Activated B cell treated with CpG ODN at 0.5 μM for 24 hours (primary cell): ENCODE measurements at regions of chr22 and their contacts with region 1.

Region 1: GRCh38 chr22:50469377-50470305 is 5.2 kb downstream of the SBF1 start:
- DNase-seq: peak; percentile 84
- ATAC-seq: peak; percentile 81
- H3K4me3 Mint-ChIP-seq: peak overlapping the region; percentile 68
- H3K27ac Mint-ChIP-seq: peak overlapping the region; percentile 88
- H3K4me1 Mint-ChIP-seq: peaks cover 69% of the 10 kb centered on the region
- H3K27me3 Mint-ChIP-seq: no peaks in the 10 kb centered on the region
- CTCF ChIP-seq: no peak

Region 2: GRCh38 chr22:50314455-50315288 is 155.0 kb before region 1 on chr22:
- CTCF ChIA-PET with region 1: no interaction called
- POLR2A ChIA-PET with region 1: interaction called, 12 read pairs
- intact Hi-C with region 1: no loop called
- DNase-seq: peak; percentile 76
- ATAC-seq: peak; percentile 90
- H3K4me3 Mint-ChIP-seq: peak overlapping the region; percentile 77
- H3K27ac Mint-ChIP-seq: peak overlapping the region; percentile 86
- H3K4me1 Mint-ChIP-seq: peaks cover 52% of the 10 kb centered on the region
- H3K27me3 Mint-ChIP-seq: no peaks in the 10 kb centered on the region
- CTCF ChIP-seq: no peak

Region 3: GRCh38 chr22:50456466-50457234 is 13.0 kb before region 1 on chr22:
- CTCF ChIA-PET with region 1: interaction called, 3 read pairs
- POLR2A ChIA-PET with region 1: interaction called, 6 read pairs
- intact Hi-C with region 1: loop called (anchors 2 kb)
- DNase-seq: no peak
- ATAC-seq: peak; percentile 45
- H3K4me3 Mint-ChIP-seq: no peak overlapping the region
- H3K27ac Mint-ChIP-seq: peak overlapping the region; percentile 64
- H3K4me1 Mint-ChIP-seq: no peaks in the 10 kb centered on the region
- H3K27me3 Mint-ChIP-seq: no peaks in the 10 kb centered on the region
- CTCF ChIP-seq: no peak

Region 4: GRCh38 chr22:50481440-50482106 is 11.9 kb after region 1 on chr22 and contains the start of gene ADM2:
- CTCF ChIA-PET with region 1: no interaction called
- POLR2A ChIA-PET with region 1: interaction called, 13 read pairs
- intact Hi-C with region 1: loop called (anchors 1 kb)
- DNase-seq: peak; percentile 69
- ATAC-seq: peak; percentile 86
- H3K4me3 Mint-ChIP-seq: peak within 1 kb of the TSS; percentile 76
- H3K27ac Mint-ChIP-seq: no peak within 1 kb of the TSS
- H3K4me1 Mint-ChIP-seq: peaks cover 10% of the 10 kb centered on the region
- H3K27me3 Mint-ChIP-seq: no peaks in the 10 kb centered on the region
- CTCF ChIP-seq: no peak
- total RNA-seq, gene ADM2: 5.1 and 5.2 TPM in 2 replicates

Region 5: DNA sequence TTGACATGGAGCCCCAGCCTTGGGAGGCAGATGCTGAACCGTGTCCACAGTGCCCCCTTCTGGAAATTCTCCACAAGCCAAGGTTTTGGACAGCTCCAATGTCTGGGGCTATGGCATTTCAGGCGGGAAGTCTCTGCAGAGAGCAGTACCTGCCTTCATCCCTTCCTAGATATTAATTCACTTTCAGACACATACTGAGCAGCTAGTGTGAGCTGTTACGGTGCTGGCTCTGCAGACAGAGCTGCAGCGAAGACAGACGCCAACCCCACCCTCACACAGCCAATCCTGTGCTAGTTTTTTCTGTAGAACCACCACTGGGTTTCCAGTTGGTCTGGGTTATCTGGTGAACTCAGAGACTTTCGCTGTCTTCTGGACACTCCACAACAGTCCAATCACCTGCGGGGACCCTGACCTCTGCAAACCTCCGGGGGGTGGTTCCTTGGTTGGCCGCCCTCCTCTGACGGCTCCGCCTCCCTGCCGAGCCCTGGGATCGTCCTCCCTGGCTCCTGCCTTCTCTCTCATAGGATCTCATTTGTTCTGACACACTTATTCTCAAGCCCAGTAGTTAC is 28.8 kb after region 1 on chr22:
- CTCF ChIA-PET with region 1: interaction called, 12 read pairs
- POLR2A ChIA-PET with region 1: interaction called, 6 read pairs
- intact Hi-C with region 1: no loop called
- DNase-seq: peak; percentile 38
- ATAC-seq: peak; percentile 95
- H3K4me3 Mint-ChIP-seq: no peak overlapping the region
- H3K27ac Mint-ChIP-seq: no peak overlapping the region
- H3K4me1 Mint-ChIP-seq: peaks cover 3% of the 10 kb centered on the region
- H3K27me3 Mint-ChIP-seq: no peaks in the 10 kb centered on the region
- CTCF ChIP-seq: no peak

Region 6: DNA sequence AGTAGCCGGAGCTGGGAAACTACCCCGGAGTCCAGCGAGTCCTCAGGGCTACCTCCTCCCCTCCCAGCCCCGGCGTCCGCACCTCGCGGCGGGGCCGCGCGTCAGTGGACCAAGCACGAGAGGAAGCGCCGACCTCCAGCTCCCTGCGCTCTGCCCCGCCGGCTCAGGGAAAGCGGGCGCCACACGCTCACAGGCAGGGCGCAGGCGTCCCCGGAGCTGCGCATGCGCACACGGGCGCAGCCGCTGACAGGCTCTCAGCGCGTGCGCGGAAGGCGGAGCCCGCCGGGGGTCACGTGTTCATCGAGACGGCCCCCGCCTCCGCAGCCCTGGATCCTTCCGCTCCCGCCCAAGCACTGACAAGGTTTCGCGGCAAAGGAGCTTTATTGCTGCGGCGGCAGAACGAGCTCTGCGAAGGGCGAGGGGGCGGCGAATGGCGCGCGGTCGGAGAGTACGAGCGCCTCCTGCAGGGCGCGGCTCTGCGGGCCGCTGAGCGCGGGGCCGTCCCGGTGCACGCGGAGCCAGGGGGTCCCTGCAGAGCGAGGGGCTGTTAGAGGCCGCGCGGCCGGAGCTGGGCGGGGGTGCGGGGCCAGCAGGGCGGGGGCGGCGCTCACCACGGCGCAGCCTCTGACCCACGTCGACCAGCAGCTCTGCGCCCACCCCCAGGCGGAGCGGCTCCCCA is 55.9 kb after region 1 on chr22 and contains the start of gene SCO2:
- CTCF ChIA-PET with region 1: interaction called, 5 read pairs
- POLR2A ChIA-PET with region 1: interaction called, 37 read pairs
- intact Hi-C with region 1: loop called (anchors 1 kb)
- DNase-seq: peak; percentile 97
- ATAC-seq: peak; percentile 52
- H3K4me3 Mint-ChIP-seq: peak within 1 kb of the TSS; percentile 84
- H3K27ac Mint-ChIP-seq: peak within 1 kb of the TSS; percentile 90
- H3K4me1 Mint-ChIP-seq: peaks cover 33% of the 10 kb centered on the region
- H3K27me3 Mint-ChIP-seq: no peaks in the 10 kb centered on the region
- CTCF ChIP-seq: no peak
- total RNA-seq, gene SCO2: 7.1 and 11.6 TPM in 2 replicates

Region 7: DNA sequence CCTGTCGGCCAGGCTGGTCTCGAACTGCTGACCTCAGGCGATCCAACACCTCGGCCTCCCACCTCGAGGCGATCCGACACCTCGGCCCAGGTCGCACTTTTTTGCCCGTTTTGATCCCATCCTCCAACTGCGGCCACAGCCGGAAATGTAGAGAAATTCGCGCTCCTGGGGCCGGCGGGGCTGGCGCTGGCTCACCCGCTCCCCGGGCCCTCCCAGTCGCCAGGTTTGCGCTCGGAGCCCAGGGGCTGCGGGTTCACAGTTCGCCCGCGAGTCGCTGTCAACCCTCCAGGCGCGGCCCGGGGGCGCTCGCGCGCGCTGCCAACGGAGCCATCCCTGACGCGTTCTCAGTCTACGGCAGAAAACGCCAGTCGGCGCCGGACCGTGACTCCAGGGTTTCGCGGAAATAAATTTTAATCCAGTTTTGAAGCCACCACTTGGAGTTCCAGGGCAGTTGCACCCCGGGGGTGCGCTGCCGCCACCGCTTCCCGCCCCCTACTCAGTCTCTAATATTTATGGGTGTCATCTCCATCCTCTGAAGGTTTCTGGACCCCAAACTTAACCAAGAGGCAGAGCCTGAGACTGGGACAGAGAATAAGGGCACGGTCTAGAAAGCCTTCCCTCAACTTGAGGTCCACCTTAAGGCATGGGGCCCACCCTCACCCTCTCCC is 74.6 kb after region 1 on chr22:
- CTCF ChIA-PET with region 1: no interaction called
- POLR2A ChIA-PET with region 1: interaction called, 10 read pairs
- intact Hi-C with region 1: loop called (anchors 5 kb)
- DNase-seq: peak; percentile 80
- ATAC-seq: peak; percentile 38
- H3K4me3 Mint-ChIP-seq: peak overlapping the region; percentile 60
- H3K27ac Mint-ChIP-seq: peak overlapping the region; percentile 82
- H3K4me1 Mint-ChIP-seq: peaks cover 56% of the 10 kb centered on the region
- H3K27me3 Mint-ChIP-seq: no peaks in the 10 kb centered on the region
- CTCF ChIP-seq: no peak